PC-9 (cell line): ENCODE measurements at regions of chr6 and their contacts with region 1.

Region 1: GRCh38 chr6:134097114-134097707 is 44.8 kb upstream of the SLC2A12 start:
- DNase-seq: peak; percentile 48 to 59
- H3K4me3 ChIP-seq: no peak overlapping the region
- H3K27ac ChIP-seq: no peak overlapping the region
- H3K4me1 ChIP-seq: peaks cover 11% of the 10 kb centered on the region; the same call in 1 of the 2 replicates
- H3K27me3 ChIP-seq: no peaks in the 10 kb centered on the region
- CTCF ChIP-seq: peak; percentile 97

Region 2: GRCh38 chr6:133609404-133610270 is 487.6 kb before region 1 on chr6:
- CTCF ChIA-PET with region 1: no interaction called
- POLR2A ChIA-PET with region 1: interaction called, 10 read pairs
- intact Hi-C with region 1: no loop called
- DNase-seq: peak; percentile 62 to 96
- H3K4me3 ChIP-seq: no peak overlapping the region
- H3K27ac ChIP-seq: peak overlapping the region; percentile 87
- H3K4me1 ChIP-seq: peaks cover 28% of the 10 kb centered on the region
- H3K27me3 ChIP-seq: no peaks in the 10 kb centered on the region
- CTCF ChIP-seq: no peak

Region 3: GRCh38 chr6:133707456-133707855 is 389.8 kb before region 1 on chr6:
- CTCF ChIA-PET with region 1: no interaction called
- POLR2A ChIA-PET with region 1: no interaction called
- intact Hi-C with region 1: no loop called
- DNase-seq: no peak
- H3K4me3 ChIP-seq: no peak overlapping the region
- H3K27ac ChIP-seq: no peak overlapping the region
- H3K4me1 ChIP-seq: no peaks in the 10 kb centered on the region
- H3K27me3 ChIP-seq: no peaks in the 10 kb centered on the region
- CTCF ChIP-seq: no peak

Region 4: GRCh38 chr6:133817460-133818047 is 279.7 kb before region 1 on chr6:
- CTCF ChIA-PET with region 1: interaction called, 16 read pairs
- POLR2A ChIA-PET with region 1: no interaction called
- intact Hi-C with region 1: no loop called
- DNase-seq: no peak
- H3K4me3 ChIP-seq: no peak overlapping the region
- H3K27ac ChIP-seq: no peak overlapping the region
- H3K4me1 ChIP-seq: no peaks in the 10 kb centered on the region
- H3K27me3 ChIP-seq: no peaks in the 10 kb centered on the region
- CTCF ChIP-seq: peak; percentile 70

Region 5: DNA sequence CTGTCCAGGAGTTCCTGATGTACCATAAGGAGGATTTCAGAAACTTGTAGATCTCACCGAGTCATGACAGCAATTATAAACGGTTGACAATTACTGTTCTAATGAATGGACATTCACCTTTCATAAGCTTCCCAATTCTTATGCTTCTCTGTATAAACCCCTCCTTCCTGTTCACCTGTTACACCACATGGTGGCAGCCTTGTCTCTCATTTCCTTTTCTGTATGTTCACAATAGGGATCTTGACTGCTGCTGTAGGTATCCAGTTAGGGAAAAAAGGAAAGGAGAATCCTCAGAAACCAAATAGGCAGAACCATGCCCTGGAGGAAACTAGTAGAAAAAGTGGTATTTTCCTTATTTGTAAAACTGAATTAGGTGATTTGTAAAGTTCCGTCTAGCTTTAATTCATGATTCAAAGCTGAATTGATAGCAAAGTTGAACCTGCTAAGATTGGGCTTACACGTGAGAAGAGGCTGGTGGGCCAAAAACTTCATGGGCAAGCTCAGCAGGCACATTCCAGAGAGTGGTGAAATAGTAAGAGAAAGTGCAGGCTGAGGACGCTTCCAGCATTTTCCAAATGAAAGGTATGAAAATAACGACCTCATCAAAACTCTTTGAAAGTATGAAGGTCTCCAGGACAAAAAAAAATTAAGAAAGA is 173.1 kb before region 1 on chr6:
- CTCF ChIA-PET with region 1: interaction called, 63 read pairs
- POLR2A ChIA-PET with region 1: interaction called, 3 read pairs
- intact Hi-C with region 1: loop called (anchors 1 kb)
- DNase-seq: peak; percentile 58 to 66
- H3K4me3 ChIP-seq: no peak overlapping the region
- H3K27ac ChIP-seq: no peak overlapping the region
- H3K4me1 ChIP-seq: no peaks in the 10 kb centered on the region
- H3K27me3 ChIP-seq: no peaks in the 10 kb centered on the region
- CTCF ChIP-seq: peak; percentile 98

Region 6: GRCh38 chr6:133973109-133973971 is 123.9 kb before region 1 on chr6:
- CTCF ChIA-PET with region 1: interaction called, 18 read pairs
- POLR2A ChIA-PET with region 1: interaction called, 3 read pairs
- intact Hi-C with region 1: loop called (anchors 1 kb)
- DNase-seq: peak in 1 of 2 experiments; percentile 59
- H3K4me3 ChIP-seq: no peak overlapping the region
- H3K27ac ChIP-seq: peak overlapping the region; percentile 35
- H3K4me1 ChIP-seq: peaks cover 6% of the 10 kb centered on the region
- H3K27me3 ChIP-seq: no peaks in the 10 kb centered on the region
- CTCF ChIP-seq: peak; percentile 98

Region 7: GRCh38 chr6:134063966-134064445 is 33.2 kb before region 1 on chr6:
- CTCF ChIA-PET with region 1: interaction called, 19 read pairs
- POLR2A ChIA-PET with region 1: no interaction called
- intact Hi-C with region 1: loop called (anchors 2 kb)
- DNase-seq: peak; percentile 62 to 77
- H3K4me3 ChIP-seq: no peak overlapping the region
- H3K27ac ChIP-seq: no peak overlapping the region
- H3K4me1 ChIP-seq: peaks cover 13% of the 10 kb centered on the region
- H3K27me3 ChIP-seq: no peaks in the 10 kb centered on the region
- CTCF ChIP-seq: peak; percentile 95